ENCODE measurements at regions of chr17 and their contacts with region 1.

Region 1: GRCh38 chr17:7136266-7136877 is 21.8 kb upstream of the ASGR2 start:
- H3K4me3 ChIP-seq: no peak overlapping the region; the same call in 1 of the 2 replicates
- H3K27ac ChIP-seq: no peak overlapping the region
- H3K4me1 ChIP-seq: no peaks in the 10 kb centered on the region
- CTCF ChIP-seq: peak; percentile 44; the same call in 1 of the 2 replicates

Region 2: DNA sequence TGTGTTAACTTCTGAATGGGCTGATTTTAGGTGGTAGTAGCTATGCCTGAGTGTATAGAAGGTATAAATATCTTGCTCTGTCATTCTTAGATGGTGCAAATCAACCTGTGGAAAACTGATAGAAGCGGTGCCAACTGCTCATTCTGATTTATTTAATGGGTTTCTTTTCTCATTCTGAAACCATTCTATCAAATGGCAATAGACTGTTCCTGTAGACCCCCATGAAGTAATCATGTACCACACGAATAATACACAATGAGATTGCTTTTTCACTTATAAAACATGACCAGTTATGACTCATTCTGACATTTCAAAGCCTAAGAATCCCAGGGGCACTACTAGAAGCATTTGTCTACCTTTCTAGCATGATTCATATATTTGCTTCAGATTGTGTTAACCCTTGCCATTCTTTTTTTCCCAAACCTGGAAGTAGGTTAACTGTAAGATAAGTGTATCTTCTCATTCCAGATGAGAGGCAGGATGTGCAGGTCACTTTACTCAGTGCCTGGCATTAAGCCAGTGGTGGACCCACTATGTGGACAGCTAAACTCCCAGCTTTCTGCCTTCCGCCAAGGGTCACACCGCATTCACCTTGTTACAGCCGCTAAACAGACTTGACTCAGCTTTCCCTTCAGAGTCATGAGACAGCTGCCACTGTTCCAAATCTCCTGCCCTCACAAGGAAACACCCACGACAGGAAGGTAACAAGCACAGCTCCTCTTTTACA is 76.0 kb before region 1 on chr17:
- CTCF ChIA-PET with region 1: interaction called, 388 read pairs
- POLR2A ChIA-PET with region 1: interaction called, 3 read pairs
- H3K4me3 ChIP-seq: no peak overlapping the region
- H3K27ac ChIP-seq: no peak overlapping the region
- H3K4me1 ChIP-seq: 0 out of 2 replicates have a peak, but pooled peaks cover 5% of the 10 kb centered on the region
- CTCF ChIP-seq: no peak

Region 3: GRCh38 chr17:7122381-7122780 is 14.0 kb before region 1 on chr17:
- CTCF ChIA-PET with region 1: interaction called, 10 read pairs
- POLR2A ChIA-PET with region 1: no interaction called
- H3K4me3 ChIP-seq: no peak overlapping the region
- H3K27ac ChIP-seq: no peak overlapping the region
- H3K4me1 ChIP-seq: no peaks in the 10 kb centered on the region
- CTCF ChIP-seq: no peak

Region 4: DNA sequence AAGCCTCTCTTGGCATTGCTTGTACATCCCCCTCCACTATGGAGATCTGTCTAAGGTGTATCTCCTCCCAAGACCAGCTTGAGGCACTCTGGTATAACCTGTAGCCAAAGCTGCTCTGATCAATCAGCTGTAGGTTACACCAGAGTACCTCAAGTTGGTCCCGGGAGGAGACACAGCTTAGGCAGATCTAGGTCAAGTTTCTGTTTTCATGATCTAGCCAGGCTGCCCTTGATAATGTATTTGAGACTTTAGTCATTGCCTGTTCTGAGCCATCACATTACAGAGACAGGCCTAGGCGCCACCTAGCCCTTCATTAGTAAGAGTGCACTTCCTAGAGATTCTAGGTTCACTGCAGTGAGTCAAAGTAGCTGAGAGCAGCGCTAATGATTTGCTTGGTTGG is 11.4 kb after region 1 on chr17:
- CTCF ChIA-PET with region 1: interaction called, 22 read pairs
- POLR2A ChIA-PET with region 1: no interaction called
- H3K4me3 ChIP-seq: no peak overlapping the region
- H3K27ac ChIP-seq: no peak overlapping the region
- H3K4me1 ChIP-seq: no peaks in the 10 kb centered on the region; the same call in 1 of the 2 replicates
- CTCF ChIP-seq: no peak

Measured in HEK293 (cell line).